Activated CD4-positive, alpha-beta T cell treated with anti-CD3 and anti-CD28 coated beads for 36 hours (primary cell): ENCODE measurements at regions of chr2 and their contacts with region 1.

Region 1: GRCh38 chr2:68623820-68624219 is 19.6 kb upstream of the PROKR1 start:
- DNase-seq: no peak
- ATAC-seq: no peak
- H3K4me3 Mint-ChIP-seq: no peak overlapping the region
- H3K27ac Mint-ChIP-seq: no peak overlapping the region
- H3K4me1 Mint-ChIP-seq: no peaks in the 10 kb centered on the region
- H3K27me3 Mint-ChIP-seq: peaks cover 7% of the 10 kb centered on the region

Region 2: GRCh38 chr2:68214381-68214780 is 409.4 kb before region 1 on chr2:
- CTCF ChIA-PET with region 1: no interaction called
- POLR2A ChIA-PET with region 1: no interaction called
- intact Hi-C with region 1: no loop called
- DNase-seq: no peak
- ATAC-seq: no peak
- H3K4me3 Mint-ChIP-seq: no peak overlapping the region
- H3K27ac Mint-ChIP-seq: peak overlapping the region; percentile 1
- H3K4me1 Mint-ChIP-seq: peaks cover 68% of the 10 kb centered on the region
- H3K27me3 Mint-ChIP-seq: no peaks in the 10 kb centered on the region

Region 3: DNA sequence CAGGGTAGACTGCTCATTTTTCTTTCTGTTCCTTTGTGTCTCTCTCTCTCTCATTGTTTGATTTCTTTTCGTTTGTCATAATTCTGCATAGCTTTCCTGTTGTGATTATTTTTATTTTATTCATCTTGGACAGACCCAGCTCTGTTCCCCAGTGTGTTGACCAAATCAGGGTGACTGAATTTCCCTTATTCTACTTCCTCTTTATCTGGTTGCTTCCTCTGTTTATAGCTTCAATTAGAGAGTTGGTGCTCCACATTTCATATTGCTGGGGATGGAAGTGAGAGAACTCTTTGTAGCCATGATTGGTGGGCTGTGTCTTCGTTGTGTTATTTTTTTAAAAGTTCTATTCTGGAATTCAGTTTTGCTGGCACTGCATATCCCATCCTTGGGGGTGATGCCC is 38.6 kb after region 1 on chr2:
- CTCF ChIA-PET with region 1: no interaction called
- POLR2A ChIA-PET with region 1: no interaction called
- intact Hi-C with region 1: loop called in 1 of 2 experiments (anchors 1 kb)
- DNase-seq: no peak
- ATAC-seq: no peak
- H3K4me3 Mint-ChIP-seq: no peak overlapping the region
- H3K27ac Mint-ChIP-seq: no peak overlapping the region
- H3K4me1 Mint-ChIP-seq: peaks cover 23% of the 10 kb centered on the region
- H3K27me3 Mint-ChIP-seq: peaks cover 23% of the 10 kb centered on the region

Region 4: DNA sequence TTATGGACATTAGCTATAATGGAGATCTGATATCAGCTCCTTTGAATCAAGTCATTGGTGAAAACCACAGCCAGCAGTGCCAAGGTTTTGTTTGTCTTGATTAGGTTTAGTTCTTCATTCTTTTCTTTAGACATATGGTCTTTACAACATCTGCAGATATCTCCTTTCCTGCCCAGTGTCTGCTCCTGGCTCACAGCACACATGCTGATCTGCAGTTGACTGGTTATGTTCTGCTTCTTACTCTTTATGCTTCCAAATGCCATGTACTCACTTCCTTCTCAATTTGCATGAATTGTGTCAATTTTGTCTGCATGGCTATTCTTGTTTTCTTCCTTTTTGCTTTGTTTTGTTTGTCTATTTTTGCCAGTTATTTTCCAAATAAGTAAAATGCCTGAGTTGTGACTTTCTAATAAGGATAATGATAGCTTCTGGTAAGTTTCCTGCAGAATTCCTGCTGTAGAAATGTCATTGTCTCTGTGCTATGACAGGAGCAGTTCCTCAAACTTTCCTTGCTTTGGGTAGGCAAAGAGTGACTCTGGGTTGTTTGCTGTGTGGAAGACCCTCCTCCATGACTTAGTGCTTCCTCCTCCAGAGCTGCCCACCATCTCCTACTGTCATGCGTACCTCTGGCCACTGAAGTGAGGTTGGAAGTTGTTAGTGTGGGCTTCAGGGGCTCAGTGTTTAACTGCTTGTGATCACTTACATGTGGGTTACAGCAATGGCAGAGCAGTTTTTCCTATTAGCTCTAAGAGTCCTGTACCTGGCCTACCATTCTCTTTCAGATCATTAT is 119.0 kb after region 1 on chr2:
- CTCF ChIA-PET with region 1: no interaction called
- POLR2A ChIA-PET with region 1: no interaction called
- intact Hi-C with region 1: no loop called
- DNase-seq: no peak
- ATAC-seq: no peak
- H3K4me3 Mint-ChIP-seq: peak overlapping the region; percentile 33
- H3K27ac Mint-ChIP-seq: peak overlapping the region; percentile 80
- H3K4me1 Mint-ChIP-seq: peaks cover 97% of the 10 kb centered on the region
- H3K27me3 Mint-ChIP-seq: no peaks in the 10 kb centered on the region